OCI-LY7 (cell line): ENCODE measurements at regions of chr14 and their contacts with region 1.

Region 1: DNA sequence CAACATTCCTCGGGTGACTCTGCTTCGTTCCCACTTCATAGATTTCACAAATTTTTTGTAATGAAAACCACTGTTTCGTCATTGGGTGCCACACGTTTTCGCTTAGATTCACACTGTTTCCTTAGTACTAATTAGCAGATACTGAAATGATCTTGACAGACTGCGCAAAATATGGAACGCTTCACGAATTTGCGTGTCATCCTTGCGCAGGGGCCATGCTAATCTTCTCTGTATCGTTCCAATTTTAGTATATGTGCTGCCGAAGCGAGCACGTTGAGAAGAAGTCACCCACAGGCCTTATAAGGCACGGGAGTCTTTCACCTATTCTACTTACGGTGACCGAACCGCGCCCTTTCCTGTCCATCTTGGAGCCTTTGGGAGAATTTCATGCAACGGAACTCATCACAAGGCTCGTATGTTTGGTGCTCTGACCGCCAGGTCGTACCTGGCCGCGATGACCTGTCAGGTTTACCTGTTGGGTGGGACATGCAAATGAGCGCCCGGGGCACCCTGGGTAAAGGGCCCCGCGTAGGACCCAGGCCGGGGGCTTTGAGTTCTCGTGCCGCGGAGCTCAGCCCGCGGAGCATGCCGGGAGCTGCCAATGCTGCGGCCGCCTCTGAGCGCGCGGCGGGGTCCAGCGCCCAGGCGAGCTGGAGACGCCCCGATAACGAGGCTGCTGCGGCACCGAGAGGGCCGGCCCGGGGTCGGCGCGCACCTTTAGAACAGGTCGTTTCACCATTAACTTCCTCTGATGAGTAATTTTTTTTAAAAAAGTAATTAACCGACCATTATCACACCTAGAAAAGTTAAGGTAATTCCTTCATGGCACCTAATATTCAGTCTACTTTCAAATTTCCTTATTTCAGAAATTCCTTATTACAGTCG is at the start of gene RNU6-8:
- DNase-seq: peak; percentile 93
- H3K4me3 ChIP-seq: peak within 1 kb of the TSS; percentile 80
- H3K27ac ChIP-seq: peak within 1 kb of the TSS; percentile 31
- H3K4me1 ChIP-seq: peaks cover 39% of the 10 kb centered on the region
- CTCF ChIP-seq: no peak
- total RNA-seq, gene RNU6-8: not detected in 2 replicates

Region 2: DNA sequence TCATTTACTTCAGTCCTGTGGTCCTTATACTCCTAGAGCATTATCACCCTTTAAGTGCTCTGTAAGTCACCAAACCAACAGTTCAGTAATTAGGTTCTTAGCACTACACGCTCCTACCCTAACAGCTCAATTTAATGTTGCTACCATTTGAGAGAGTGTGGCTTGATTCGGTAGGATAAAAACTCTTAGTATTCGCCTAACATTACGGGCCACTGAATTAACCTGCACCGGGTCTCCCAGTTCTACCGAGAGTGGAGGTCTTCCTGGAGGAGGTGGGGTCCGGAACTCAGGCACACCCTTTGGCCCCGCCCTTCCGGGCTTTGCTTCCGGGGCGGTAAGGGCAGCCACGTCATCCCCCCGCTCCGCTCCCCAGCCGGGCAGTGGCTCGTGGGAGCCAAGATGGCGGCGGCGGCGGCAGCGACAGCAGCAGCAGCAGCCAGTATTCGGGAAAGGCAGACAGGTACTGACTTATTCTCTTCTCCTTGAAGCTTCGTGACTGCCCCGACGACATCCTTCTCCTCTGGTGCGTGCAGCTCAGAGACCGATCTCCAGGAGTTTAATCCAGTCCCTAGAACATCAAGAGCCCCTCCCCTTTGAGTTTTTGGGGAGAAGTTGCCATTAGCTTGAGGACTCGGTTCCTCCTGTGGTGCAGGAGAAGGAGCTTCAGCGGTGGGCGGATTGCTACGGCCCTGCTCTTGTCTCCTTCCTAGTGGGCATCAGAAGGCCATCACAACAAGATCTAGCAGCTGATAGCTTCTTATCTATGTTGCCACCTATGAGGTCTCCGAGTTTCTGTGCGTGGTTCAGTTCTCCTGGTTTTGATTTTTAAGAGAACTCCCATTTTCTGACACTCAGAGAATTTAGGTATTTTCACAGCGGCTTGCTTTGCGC is 1581.1 kb before region 1 on chr14 and contains the start of gene SCFD1:
- CTCF ChIA-PET with region 1: no interaction called
- POLR2A ChIA-PET with region 1: no interaction called
- intact Hi-C with region 1: loop called (anchors 10 kb)
- DNase-seq: peak; percentile 95
- H3K4me3 ChIP-seq: peak within 1 kb of the TSS; percentile 81
- H3K27ac ChIP-seq: peak within 1 kb of the TSS; percentile 74
- H3K4me1 ChIP-seq: peaks cover 28% of the 10 kb centered on the region
- CTCF ChIP-seq: no peak
- total RNA-seq, gene SCFD1: 44.6 and 65.1 TPM in 2 replicates

Region 3: GRCh38 chr14:31456841-31457664 is 746.2 kb before region 1 on chr14 and contains the start of gene DTD2:
- CTCF ChIA-PET with region 1: no interaction called
- POLR2A ChIA-PET with region 1: no interaction called
- intact Hi-C with region 1: loop called (anchors 5 kb)
- DNase-seq: peak; percentile 97
- H3K4me3 ChIP-seq: peak within 1 kb of the TSS; percentile 81
- H3K27ac ChIP-seq: peak within 1 kb of the TSS; percentile 56
- H3K4me1 ChIP-seq: peaks cover 17% of the 10 kb centered on the region
- CTCF ChIP-seq: peak; percentile 50
- total RNA-seq, gene DTD2: 48.9 and 61.4 TPM in 2 replicates

Region 4: GRCh38 chr14:31660191-31660590 is 543.0 kb before region 1 on chr14:
- CTCF ChIA-PET with region 1: no interaction called
- POLR2A ChIA-PET with region 1: no interaction called
- intact Hi-C with region 1: no loop called
- DNase-seq: no peak
- H3K4me3 ChIP-seq: no peak overlapping the region
- H3K27ac ChIP-seq: no peak overlapping the region
- H3K4me1 ChIP-seq: no peaks in the 10 kb centered on the region
- CTCF ChIP-seq: no peak

Region 5: GRCh38 chr14:32076278-32077080 is 126.8 kb before region 1 on chr14:
- CTCF ChIA-PET with region 1: no interaction called
- POLR2A ChIA-PET with region 1: interaction called, 4 read pairs
- intact Hi-C with region 1: loop called (anchors 1 kb)
- DNase-seq: peak; percentile 59
- H3K4me3 ChIP-seq: peak overlapping the region; percentile 84
- H3K27ac ChIP-seq: no peak overlapping the region
- H3K4me1 ChIP-seq: peaks cover 11% of the 10 kb centered on the region
- CTCF ChIP-seq: no peak